Common myeloid progenitor, CD34-positive (primary cell): ENCODE measurements at regions of chr1 and their contacts with region 1.

Region 1: GRCh38 chr1:171515299-171515698 is 30.0 kb downstream of the PRRC2C start:
- DNase-seq: no peak
- H3K4me3 ChIP-seq: no peak overlapping the region
- H3K27ac ChIP-seq: no peak overlapping the region
- H3K4me1 ChIP-seq: no peaks in the 10 kb centered on the region
- H3K27me3 ChIP-seq: no peaks in the 10 kb centered on the region

Region 2: DNA sequence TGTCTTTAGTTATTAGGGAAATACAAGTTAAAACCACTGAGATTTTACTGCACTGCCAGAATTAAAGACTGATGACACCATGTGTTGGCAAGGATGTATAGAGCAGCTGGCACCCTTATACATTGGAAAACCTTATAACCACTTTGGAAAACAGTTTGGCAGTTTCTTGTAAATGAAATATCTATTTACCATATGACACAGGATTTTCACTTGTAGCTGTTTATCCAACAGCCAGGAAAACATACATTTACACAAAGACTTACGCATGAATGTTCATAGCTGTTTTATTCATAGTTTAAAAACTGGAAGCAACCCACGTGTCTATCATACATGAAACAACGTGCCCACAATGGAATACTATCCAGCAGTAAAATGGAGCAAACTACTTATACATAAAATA is 15.4 kb after region 1 on chr1:
- CTCF ChIA-PET with region 1: interaction called, 14 read pairs
- POLR2A ChIA-PET with region 1: no interaction called
- DNase-seq: no peak
- H3K4me3 ChIP-seq: no peak overlapping the region
- H3K27ac ChIP-seq: no peak overlapping the region
- H3K4me1 ChIP-seq: no peaks in the 10 kb centered on the region
- H3K27me3 ChIP-seq: no peaks in the 10 kb centered on the region